ENCODE measurements at regions of chr13 and their contacts with region 1.

Region 1: DNA sequence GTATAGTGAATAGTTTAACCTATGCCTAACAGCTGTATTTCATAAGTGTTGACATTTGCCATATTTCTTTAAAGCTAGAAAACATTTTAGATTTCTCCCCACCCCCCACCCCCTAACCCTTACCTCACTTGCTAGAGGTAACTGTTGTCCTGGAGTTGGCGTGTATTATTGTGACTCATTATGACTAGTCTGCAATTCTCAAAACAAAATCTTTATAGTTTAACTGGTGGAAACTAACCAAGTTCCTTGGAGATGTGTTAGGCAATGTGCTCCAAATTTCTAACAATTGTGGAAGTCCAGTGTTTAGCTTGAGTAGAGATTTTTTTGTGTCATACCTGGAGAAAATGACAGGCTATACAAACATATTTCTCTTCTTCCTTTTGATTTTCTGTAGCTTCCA is 38.0 kb downstream of the KCTD4 start:
- DNase-seq: peak; percentile 92
- H3K4me3 Mint-ChIP-seq: peak overlapping the region; percentile 35
- H3K27ac Mint-ChIP-seq: peak overlapping the region; percentile 91
- H3K4me1 Mint-ChIP-seq: peaks cover 9% of the 10 kb centered on the region
- H3K27me3 Mint-ChIP-seq: no peaks in the 10 kb centered on the region
- CTCF ChIP-seq: no peak

Region 2: DNA sequence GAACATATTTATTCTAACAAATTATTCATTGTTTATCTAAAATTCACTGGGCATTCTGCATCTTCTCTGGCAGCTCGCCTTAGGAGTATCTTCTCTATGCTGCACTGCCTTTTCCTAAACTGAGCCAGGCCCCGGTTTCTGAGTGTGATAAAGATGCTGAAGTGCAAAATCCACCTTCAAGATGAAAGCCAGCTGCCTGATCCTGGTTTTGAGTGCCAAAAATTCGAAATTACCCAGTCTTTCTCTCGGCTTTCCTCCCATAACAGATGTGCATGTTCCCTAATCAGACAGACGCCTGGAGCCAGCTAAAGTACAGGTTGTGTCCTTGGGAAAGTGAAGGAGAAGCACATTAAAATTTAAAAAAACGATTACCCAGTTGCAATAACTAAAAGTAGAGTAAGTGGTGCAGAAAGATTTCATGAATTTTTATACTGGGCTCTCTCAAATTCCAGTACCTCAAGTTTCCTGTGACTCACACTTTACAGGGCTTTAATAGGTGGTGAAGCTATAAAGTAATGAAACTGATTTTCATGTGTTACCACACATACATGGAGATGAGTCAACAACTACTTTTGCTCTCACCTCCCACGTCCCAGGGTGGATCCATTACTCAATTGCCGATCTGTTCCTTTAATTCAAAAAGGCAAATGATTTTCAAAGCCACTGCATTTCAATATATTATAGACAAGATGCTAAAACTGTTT is 107.5 kb before region 1 on chr13:
- CTCF ChIA-PET with region 1: interaction called, 4 read pairs
- POLR2A ChIA-PET with region 1: interaction called, 30 read pairs
- intact Hi-C with region 1: no loop called
- DNase-seq: peak; percentile 93
- H3K4me3 Mint-ChIP-seq: peak overlapping the region; percentile 66
- H3K27ac Mint-ChIP-seq: peak overlapping the region; percentile 88
- H3K4me1 Mint-ChIP-seq: peaks cover 14% of the 10 kb centered on the region
- H3K27me3 Mint-ChIP-seq: no peaks in the 10 kb centered on the region
- CTCF ChIP-seq: no peak

Region 3: DNA sequence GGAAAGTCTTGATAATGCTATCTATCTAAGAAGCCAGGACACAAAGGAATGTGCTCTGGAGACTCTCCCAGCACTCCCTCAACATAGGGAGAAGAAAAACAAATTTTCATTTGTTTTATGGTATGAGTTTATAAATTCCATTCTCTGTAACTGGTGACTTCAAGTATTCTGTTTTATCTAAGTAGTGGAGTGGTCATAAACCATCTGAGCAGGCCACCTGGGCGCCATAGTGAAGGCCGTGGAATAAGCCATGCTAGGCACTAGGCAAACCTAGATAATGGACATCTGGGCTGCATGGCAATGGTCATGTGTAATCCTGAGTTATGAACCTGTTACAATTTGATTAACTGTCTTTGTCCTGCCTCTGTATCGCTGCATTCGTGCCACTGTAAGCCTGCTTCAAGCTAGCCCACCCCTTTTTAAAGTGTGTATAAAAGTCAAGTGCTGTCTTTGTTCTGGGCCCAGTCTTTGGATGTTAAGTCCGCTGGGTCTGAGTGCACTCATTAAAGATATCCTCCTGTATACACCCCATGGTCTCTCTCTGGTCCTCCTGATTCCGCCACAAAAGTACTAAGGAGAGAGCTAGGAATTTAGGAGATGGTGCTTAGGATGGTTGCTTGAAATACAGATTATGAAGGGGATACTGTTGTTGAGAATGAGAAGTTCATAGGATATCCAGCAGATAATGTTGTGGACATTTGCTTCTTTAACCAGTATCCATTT is 29.3 kb before region 1 on chr13:
- CTCF ChIA-PET with region 1: interaction called, 3 read pairs
- POLR2A ChIA-PET with region 1: interaction called, 19 read pairs
- intact Hi-C with region 1: no loop called
- DNase-seq: no peak
- H3K4me3 Mint-ChIP-seq: no peak overlapping the region
- H3K27ac Mint-ChIP-seq: no peak overlapping the region
- H3K4me1 Mint-ChIP-seq: peaks cover 30% of the 10 kb centered on the region
- H3K27me3 Mint-ChIP-seq: no peaks in the 10 kb centered on the region
- CTCF ChIP-seq: no peak

Region 4: GRCh38 chr13:45142440-45143345 is 20.1 kb before region 1 on chr13:
- CTCF ChIA-PET with region 1: interaction called, 3 read pairs
- POLR2A ChIA-PET with region 1: interaction called, 19 read pairs
- intact Hi-C with region 1: no loop called
- DNase-seq: no peak
- H3K4me3 Mint-ChIP-seq: no peak overlapping the region
- H3K27ac Mint-ChIP-seq: peak overlapping the region; percentile 78
- H3K4me1 Mint-ChIP-seq: peaks cover 24% of the 10 kb centered on the region
- H3K27me3 Mint-ChIP-seq: no peaks in the 10 kb centered on the region
- CTCF ChIP-seq: no peak

Region 5: DNA sequence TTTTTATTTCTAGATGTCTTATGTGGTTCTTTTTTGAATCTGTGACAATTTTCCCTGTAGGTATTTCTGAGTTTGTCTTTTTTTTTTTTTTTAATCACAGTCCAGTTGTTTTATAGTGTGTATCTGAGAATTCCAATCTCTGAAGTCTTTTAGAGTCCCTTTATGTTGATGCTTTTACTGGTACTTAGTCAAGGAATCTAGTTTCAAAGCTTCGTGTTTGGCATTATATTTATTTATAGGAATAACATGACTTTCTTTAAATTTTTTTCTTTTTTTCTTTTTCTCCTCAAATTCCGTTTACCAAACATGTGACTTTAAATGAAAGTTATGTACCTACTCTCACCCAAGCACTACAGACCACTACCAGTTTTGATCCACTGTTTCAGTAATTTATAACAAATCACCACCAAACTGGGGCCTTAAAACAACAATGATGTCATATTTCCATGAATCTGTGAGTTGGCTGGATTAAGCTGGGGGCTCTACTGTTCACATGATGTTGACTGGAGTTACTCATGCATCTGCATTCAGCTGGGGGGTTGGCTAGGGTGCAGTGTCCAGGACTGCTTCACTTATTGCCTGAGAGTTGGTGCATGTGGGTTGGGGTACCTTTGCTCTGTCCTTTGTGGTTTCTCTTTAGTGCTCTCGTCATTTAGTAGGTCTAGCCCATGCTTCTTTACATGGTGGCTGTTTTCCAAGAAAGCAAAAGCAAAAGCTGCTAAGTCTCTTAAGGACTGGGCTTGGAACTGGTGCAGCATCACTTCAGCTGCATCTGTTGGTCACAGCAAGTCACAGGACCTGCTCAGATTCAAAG is 15.7 kb after region 1 on chr13:
- CTCF ChIA-PET with region 1: interaction called, 3 read pairs
- POLR2A ChIA-PET with region 1: interaction called, 48 read pairs
- intact Hi-C with region 1: no loop called
- DNase-seq: peak; percentile 14
- H3K4me3 Mint-ChIP-seq: no peak overlapping the region
- H3K27ac Mint-ChIP-seq: peak overlapping the region; percentile 11
- H3K4me1 Mint-ChIP-seq: peaks cover 15% of the 10 kb centered on the region
- H3K27me3 Mint-ChIP-seq: no peaks in the 10 kb centered on the region
- CTCF ChIP-seq: no peak

Region 6: DNA sequence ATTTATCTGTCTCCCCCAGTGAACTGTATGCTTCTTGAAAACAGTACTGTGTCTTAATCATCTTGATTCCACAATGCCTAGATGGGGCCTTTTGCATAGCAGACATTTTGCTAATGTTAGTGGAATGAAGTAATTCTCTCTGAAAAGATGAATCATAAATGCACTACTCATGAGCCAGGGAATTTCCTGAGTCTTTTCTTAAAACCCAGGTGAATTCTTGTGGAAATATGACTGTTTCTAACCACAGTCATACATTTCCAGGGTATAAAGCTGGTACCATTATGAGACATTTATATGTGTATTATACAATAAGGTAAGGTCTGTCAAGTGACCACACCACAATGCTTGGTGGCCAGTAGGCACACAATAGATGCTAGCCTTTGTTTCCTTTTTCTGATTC is 43.5 kb after region 1 on chr13:
- CTCF ChIA-PET with region 1: interaction called, 4 read pairs
- POLR2A ChIA-PET with region 1: interaction called, 28 read pairs
- intact Hi-C with region 1: no loop called
- DNase-seq: peak; percentile 88
- H3K4me3 Mint-ChIP-seq: peak overlapping the region; percentile 56
- H3K27ac Mint-ChIP-seq: peak overlapping the region; percentile 88
- H3K4me1 Mint-ChIP-seq: peaks cover 47% of the 10 kb centered on the region
- H3K27me3 Mint-ChIP-seq: no peaks in the 10 kb centered on the region
- CTCF ChIP-seq: no peak

Measured in MCF 10A (cell line).